ENCODE measurements at regions of chr2 and their contacts with region 1.

Region 1: GRCh38 chr2:226799181-226799975 is at the start of gene IRS1:
- DNase-seq: peak in 1 of 2 experiments; percentile 76
- ATAC-seq: peak; percentile 45 to 46
- H3K4me3 ChIP-seq: peak within 1 kb of the TSS; percentile 80
- H3K27ac ChIP-seq: peak within 1 kb of the TSS; percentile 95 to 100
- H3K4me1 ChIP-seq: peaks cover 45% of the 10 kb centered on the region
- CTCF ChIP-seq: peak; percentile 86; the same call in 2 of the 3 replicates
- EP300 ChIP-seq: no peak; a peak in 1 of 5 replicates
- POLR2A ChIP-seq: peak; percentile 54
- RAD21 ChIP-seq: peak; percentile 48 to 88
- polyA plus RNA-seq, gene IRS1: 10.4 and 12.9 TPM in 2 replicates

Region 2: DNA sequence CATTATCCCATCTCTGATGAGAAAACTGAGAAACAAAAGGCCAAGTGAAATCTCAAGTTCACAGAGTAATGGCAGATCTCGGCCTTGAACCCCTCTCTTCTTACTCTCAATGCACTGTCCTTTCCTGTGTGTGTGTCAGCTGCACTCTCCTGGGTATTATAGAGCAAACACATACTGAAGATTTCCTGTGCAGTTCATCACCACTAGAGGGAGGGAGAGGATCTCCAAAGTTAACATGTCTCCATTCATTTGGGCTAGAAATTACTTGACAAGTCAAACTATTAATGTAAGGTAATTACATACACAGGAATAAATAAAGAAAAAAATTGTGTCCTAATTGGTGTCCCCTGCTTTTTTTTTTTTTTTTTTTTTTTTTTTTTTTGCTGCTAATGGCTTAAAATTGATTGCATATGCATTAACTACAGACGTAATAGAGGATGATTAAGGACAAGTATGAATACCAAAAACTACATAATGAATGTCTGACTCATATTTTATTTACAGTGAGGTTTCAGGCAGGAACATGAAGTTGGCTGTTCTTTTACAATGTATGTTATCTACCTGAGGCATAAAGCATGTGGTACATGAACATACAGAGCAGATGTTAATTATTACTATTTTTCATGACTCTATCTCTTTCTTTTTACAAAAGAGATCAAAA is 1130.6 kb before region 1 on chr2:
- CTCF ChIA-PET with region 1: interaction called, 28 read pairs
- POLR2A ChIA-PET with region 1: interaction called, 4 read pairs
- DNase-seq: peak; percentile 47 to 75
- ATAC-seq: peak; percentile 93 to 95
- H3K4me3 ChIP-seq: no peak overlapping the region
- H3K27ac ChIP-seq: no peak overlapping the region
- H3K4me1 ChIP-seq: no peaks in the 10 kb centered on the region
- CTCF ChIP-seq: peak; percentile 82
- EP300 ChIP-seq: no peak
- POLR2A ChIP-seq: no peak
- RAD21 ChIP-seq: peak; percentile 85 to 89

Region 3: DNA sequence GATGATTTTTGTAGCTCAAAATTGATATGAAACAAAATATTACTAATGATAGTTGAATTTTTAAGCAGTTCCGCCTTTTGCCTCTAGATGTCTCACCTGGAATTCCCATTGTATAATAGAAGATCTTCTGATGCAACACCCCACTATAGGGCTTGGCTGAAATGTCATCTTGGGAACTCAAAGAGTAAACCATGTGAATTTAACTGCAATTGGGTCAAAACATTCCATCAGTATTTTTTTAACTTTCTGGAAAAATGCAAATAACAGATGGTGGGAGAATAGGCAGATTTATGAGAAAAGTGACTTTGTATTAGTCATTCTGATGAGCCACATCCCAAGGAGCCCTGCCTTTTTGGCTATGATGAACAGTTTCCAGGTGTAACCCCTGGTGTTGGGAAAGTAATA is 909.9 kb before region 1 on chr2:
- CTCF ChIA-PET with region 1: interaction called, 17 read pairs
- POLR2A ChIA-PET with region 1: no interaction called
- DNase-seq: peak; percentile 10 to 74
- ATAC-seq: peak; percentile 68 to 70
- H3K4me3 ChIP-seq: no peak overlapping the region
- H3K27ac ChIP-seq: peak overlapping the region; percentile 45 to 70
- H3K4me1 ChIP-seq: peaks cover 16% of the 10 kb centered on the region
- CTCF ChIP-seq: peak; percentile 81
- EP300 ChIP-seq: 0 out of 5 replicates have a peak, but pooled peaks of 1 of the 2 experiments have one; percentile 36
- POLR2A ChIP-seq: no peak
- RAD21 ChIP-seq: peak; percentile 85 to 92

Region 4: DNA sequence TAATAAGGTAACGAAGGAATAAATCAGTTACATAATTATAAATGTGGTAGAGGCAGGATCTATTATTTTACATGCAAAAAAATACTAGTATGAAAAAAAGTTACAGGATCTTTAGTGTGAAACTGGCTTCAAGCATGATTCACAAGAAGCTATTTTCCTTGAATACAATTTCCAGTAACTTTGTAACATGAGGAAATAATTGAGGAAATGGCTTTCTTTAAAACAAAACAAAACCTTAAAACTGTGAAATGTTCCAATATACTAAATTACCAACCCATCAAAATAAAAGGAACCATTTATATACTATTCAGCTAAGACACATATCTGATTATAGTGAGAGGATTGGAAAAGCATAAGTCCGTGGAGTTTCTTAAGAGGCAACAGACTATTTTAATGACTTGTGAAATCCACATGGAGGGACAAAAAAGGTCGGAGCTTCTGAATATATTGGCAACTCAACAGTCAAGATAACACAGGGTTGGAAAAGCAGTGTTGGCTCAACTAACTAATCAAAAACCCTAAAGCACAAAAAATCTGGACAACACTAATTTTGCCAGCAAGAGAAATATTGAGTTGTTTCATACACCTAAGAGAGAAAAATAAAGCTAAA is 10.4 kb before region 1 on chr2:
- CTCF ChIA-PET with region 1: interaction called, 16 read pairs
- POLR2A ChIA-PET with region 1: interaction called, 4 read pairs
- DNase-seq: no peak
- ATAC-seq: no peak
- H3K4me3 ChIP-seq: no peak overlapping the region
- H3K27ac ChIP-seq: no peak overlapping the region; a peak in 1 of 6 replicates
- H3K4me1 ChIP-seq: peaks cover 41% of the 10 kb centered on the region
- CTCF ChIP-seq: no peak
- EP300 ChIP-seq: no peak
- POLR2A ChIP-seq: no peak
- RAD21 ChIP-seq: no peak

Region 5: GRCh38 chr2:226813148-226813701 is 13.8 kb after region 1 on chr2:
- CTCF ChIA-PET with region 1: interaction called, 13 read pairs
- POLR2A ChIA-PET with region 1: no interaction called
- DNase-seq: no peak
- ATAC-seq: peak in 1 of 2 experiments; percentile 72; a peak in 2 of 6 replicates
- H3K4me3 ChIP-seq: no peak overlapping the region
- H3K27ac ChIP-seq: no peak overlapping the region
- H3K4me1 ChIP-seq: no peaks in the 10 kb centered on the region
- CTCF ChIP-seq: peak; percentile 32; the same call in 2 of the 3 replicates
- EP300 ChIP-seq: no peak
- POLR2A ChIP-seq: no peak
- RAD21 ChIP-seq: peak; percentile 45 to 66; a peak in 4 of 5 replicates

Region 6: GRCh38 chr2:226835796-226836547 is 36.6 kb after region 1 on chr2 and contains the start of gene RHBDD1:
- CTCF ChIA-PET with region 1: interaction called, 11 read pairs
- POLR2A ChIA-PET with region 1: interaction called, 5 read pairs
- DNase-seq: peak; percentile 88 to 98
- ATAC-seq: peak; percentile 96 to 97
- H3K4me3 ChIP-seq: peak within 1 kb of the TSS; percentile 72
- H3K27ac ChIP-seq: peak within 1 kb of the TSS; percentile 97 to 100
- H3K4me1 ChIP-seq: peaks cover 41% of the 10 kb centered on the region
- CTCF ChIP-seq: no peak
- EP300 ChIP-seq: no peak
- POLR2A ChIP-seq: peak; percentile 98
- RAD21 ChIP-seq: 0 out of 5 replicates have a peak, but pooled peaks of 1 of the 2 experiments have one; percentile 11
- polyA plus RNA-seq, gene RHBDD1: 46.9 and 50.6 TPM in 2 replicates

Region 7: GRCh38 chr2:226984750-226985582 is 185.6 kb after region 1 on chr2:
- CTCF ChIA-PET with region 1: interaction called, 26 read pairs
- POLR2A ChIA-PET with region 1: no interaction called
- DNase-seq: peak; percentile 45 to 66
- ATAC-seq: peak; percentile 78 to 88; a peak in 4 of 6 replicates
- H3K4me3 ChIP-seq: no peak overlapping the region
- H3K27ac ChIP-seq: peak overlapping the region in 1 of 2 experiments; percentile 8; a peak in 1 of 6 replicates
- H3K4me1 ChIP-seq: 0 out of 3 replicates have a peak, but pooled peaks cover 2% of the 10 kb centered on the region
- CTCF ChIP-seq: peak; percentile 89
- EP300 ChIP-seq: no peak
- POLR2A ChIP-seq: no peak
- RAD21 ChIP-seq: peak; percentile 91